Activated CD4-positive, alpha-beta memory T cell treated with anti-CD3 and anti-CD28 coated beads for 36 hours (primary cell): ENCODE measurements at regions of chr5 and their contacts with region 1.

Region 1: GRCh38 chr5:116947691-116948528 is 373.3 kb upstream of the SEMA6A start:
- DNase-seq: peak; percentile 73
- H3K4me3 Mint-ChIP-seq: no peak overlapping the region
- H3K27ac Mint-ChIP-seq: no peak overlapping the region
- H3K4me1 Mint-ChIP-seq: no peaks in the 10 kb centered on the region
- H3K27me3 Mint-ChIP-seq: no peaks in the 10 kb centered on the region

Region 2: GRCh38 chr5:116137544-116138378 is 810.1 kb before region 1 on chr5:
- CTCF ChIA-PET with region 1: interaction called, 29 read pairs
- POLR2A ChIA-PET with region 1: no interaction called
- intact Hi-C with region 1: loop called (anchors 1 kb)
- DNase-seq: no peak
- H3K4me3 Mint-ChIP-seq: no peak overlapping the region
- H3K27ac Mint-ChIP-seq: no peak overlapping the region
- H3K4me1 Mint-ChIP-seq: peaks cover 22% of the 10 kb centered on the region
- H3K27me3 Mint-ChIP-seq: no peaks in the 10 kb centered on the region

Region 3: DNA sequence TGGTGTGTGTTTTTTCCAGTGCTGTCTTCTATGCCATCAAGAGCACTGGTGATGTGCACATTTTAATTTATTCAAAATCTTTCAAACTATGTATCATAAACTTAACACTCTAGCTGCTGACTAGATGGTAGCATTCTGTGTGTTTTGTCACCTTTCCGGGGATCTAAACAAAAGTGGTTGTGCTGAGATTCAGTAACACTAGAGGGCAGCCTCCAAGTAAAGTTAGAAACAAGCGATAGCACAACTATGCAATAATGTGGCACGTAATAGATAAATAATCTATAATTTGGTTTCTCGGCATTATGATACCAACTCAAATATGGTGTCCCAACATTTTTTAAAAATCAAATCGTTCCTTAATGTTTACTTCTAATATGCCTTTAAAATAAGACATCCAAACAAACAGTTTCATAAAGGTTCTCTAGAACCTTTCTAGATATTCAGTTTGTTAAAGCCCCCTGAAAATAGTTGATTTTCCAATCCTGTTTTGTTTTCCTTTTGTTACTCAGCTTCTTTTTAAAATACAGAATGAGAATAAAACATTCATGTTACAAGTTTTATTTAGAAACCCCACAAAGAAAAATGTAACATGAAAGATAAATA is 390.1 kb before region 1 on chr5:
- CTCF ChIA-PET with region 1: no interaction called
- POLR2A ChIA-PET with region 1: no interaction called
- intact Hi-C with region 1: loop called (anchors 5 kb)
- DNase-seq: no peak
- H3K4me3 Mint-ChIP-seq: no peak overlapping the region
- H3K27ac Mint-ChIP-seq: no peak overlapping the region
- H3K4me1 Mint-ChIP-seq: no peaks in the 10 kb centered on the region
- H3K27me3 Mint-ChIP-seq: no peaks in the 10 kb centered on the region

Region 4: GRCh38 chr5:116727248-116727647 is 220.7 kb before region 1 on chr5:
- CTCF ChIA-PET with region 1: no interaction called
- POLR2A ChIA-PET with region 1: no interaction called
- intact Hi-C with region 1: no loop called
- DNase-seq: no peak
- H3K4me3 Mint-ChIP-seq: no peak overlapping the region
- H3K27ac Mint-ChIP-seq: no peak overlapping the region
- H3K4me1 Mint-ChIP-seq: no peaks in the 10 kb centered on the region
- H3K27me3 Mint-ChIP-seq: no peaks in the 10 kb centered on the region

Region 5: DNA sequence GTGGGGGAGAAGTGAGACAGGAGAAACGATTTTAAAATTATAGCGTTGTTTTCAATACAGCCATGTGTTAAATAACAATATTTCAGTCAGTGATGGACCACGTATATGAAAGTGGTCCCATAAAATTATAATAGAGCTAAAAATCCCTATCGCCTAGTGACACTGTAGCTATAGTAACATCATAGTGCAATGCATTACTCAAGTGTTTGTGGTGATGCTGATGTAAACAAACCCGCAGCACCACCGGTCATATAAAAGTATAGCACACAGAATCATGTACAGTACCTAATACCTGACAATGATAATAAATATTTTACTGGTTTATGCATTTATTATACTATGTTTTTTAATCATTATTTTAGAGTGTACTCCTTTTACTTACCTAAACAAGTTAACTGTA is 34.1 kb after region 1 on chr5:
- CTCF ChIA-PET with region 1: no interaction called
- POLR2A ChIA-PET with region 1: no interaction called
- intact Hi-C with region 1: no loop called
- DNase-seq: no peak
- H3K4me3 Mint-ChIP-seq: no peak overlapping the region
- H3K27ac Mint-ChIP-seq: no peak overlapping the region
- H3K4me1 Mint-ChIP-seq: no peaks in the 10 kb centered on the region
- H3K27me3 Mint-ChIP-seq: no peaks in the 10 kb centered on the region